ENCODE measurements at regions of chr1 and their contacts with region 1.

Region 1: DNA sequence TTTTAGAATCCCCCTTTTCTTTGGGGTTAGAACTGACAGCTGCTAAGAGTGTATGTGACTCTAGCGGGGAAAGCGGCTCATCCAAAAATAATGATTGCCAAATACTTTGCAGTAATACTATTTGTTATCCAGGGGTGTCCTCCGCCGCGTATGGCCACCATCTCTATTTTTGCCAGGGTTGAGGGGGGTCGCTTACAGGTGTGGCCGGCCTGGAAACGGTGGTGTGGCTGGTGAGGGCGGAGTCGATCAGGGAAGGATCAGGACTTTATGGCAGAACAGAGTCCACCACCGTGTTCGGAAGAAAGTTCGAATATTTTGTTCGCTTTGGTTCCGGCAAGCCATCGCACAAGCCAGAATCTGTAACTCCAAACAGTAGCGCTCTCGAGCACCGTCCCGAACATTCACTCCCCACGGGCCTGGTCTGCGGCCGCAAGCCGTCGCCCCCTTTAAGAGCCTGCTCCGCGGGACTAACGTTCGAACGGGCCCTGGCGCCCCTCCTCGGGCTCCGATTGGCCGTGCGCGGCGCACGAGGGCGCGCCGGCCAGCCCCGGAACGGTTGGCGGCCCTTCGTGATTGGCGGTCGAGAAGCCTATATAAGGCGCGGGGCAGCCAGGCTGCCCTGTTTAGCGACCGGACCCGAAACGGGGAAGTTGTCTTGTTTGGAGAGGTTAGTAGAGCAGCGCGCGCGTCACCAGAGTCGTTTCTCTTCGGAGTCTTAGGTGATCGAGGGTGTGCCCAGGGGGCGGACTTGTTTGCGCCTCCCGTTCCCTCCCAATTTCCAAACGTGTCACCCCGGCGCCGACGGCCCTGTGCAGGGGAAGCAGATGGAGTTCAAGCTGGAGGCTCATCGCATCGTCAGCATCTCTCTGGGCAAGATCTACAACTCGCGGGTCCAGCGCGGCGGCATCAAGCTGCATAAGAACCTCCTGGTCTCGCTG is at the start of gene IER5:
- DNase-seq: peak; percentile 98
- H3K4me3 Mint-ChIP-seq: peak within 1 kb of the TSS; percentile 97
- H3K27ac Mint-ChIP-seq: peak within 1 kb of the TSS; percentile 96
- H3K4me1 Mint-ChIP-seq: peaks cover 39% of the 10 kb centered on the region
- H3K27me3 Mint-ChIP-seq: peaks cover 2% of the 10 kb centered on the region
- total RNA-seq, gene IER5: 27.9 to 28.9 TPM

Region 2: GRCh38 chr1:180571832-180572636 is 516.3 kb before region 1 on chr1:
- CTCF ChIA-PET with region 1: no interaction called
- POLR2A ChIA-PET with region 1: no interaction called
- intact Hi-C with region 1: loop called (anchors 5 kb)
- DNase-seq: peak; percentile 77
- H3K4me3 Mint-ChIP-seq: peak overlapping the region; percentile 17
- H3K27ac Mint-ChIP-seq: peak overlapping the region; percentile 48
- H3K4me1 Mint-ChIP-seq: peaks cover 22% of the 10 kb centered on the region
- H3K27me3 Mint-ChIP-seq: peaks cover 20% of the 10 kb centered on the region

Region 3: GRCh38 chr1:180791806-180792205 is 296.5 kb before region 1 on chr1:
- CTCF ChIA-PET with region 1: no interaction called
- POLR2A ChIA-PET with region 1: no interaction called
- intact Hi-C with region 1: no loop called
- DNase-seq: no peak
- H3K4me3 Mint-ChIP-seq: no peak overlapping the region
- H3K27ac Mint-ChIP-seq: no peak overlapping the region
- H3K4me1 Mint-ChIP-seq: peaks cover 7% of the 10 kb centered on the region
- H3K27me3 Mint-ChIP-seq: no peaks in the 10 kb centered on the region

Region 4: GRCh38 chr1:181021811-181022434 is 66.4 kb before region 1 on chr1:
- CTCF ChIA-PET with region 1: interaction called, 5 read pairs
- POLR2A ChIA-PET with region 1: interaction called, 39 read pairs
- intact Hi-C with region 1: loop called (anchors 1 kb)
- DNase-seq: peak; percentile 84
- H3K4me3 Mint-ChIP-seq: peak overlapping the region; percentile 94
- H3K27ac Mint-ChIP-seq: peak overlapping the region; percentile 97
- H3K4me1 Mint-ChIP-seq: peaks cover 37% of the 10 kb centered on the region
- H3K27me3 Mint-ChIP-seq: no peaks in the 10 kb centered on the region

Region 5: DNA sequence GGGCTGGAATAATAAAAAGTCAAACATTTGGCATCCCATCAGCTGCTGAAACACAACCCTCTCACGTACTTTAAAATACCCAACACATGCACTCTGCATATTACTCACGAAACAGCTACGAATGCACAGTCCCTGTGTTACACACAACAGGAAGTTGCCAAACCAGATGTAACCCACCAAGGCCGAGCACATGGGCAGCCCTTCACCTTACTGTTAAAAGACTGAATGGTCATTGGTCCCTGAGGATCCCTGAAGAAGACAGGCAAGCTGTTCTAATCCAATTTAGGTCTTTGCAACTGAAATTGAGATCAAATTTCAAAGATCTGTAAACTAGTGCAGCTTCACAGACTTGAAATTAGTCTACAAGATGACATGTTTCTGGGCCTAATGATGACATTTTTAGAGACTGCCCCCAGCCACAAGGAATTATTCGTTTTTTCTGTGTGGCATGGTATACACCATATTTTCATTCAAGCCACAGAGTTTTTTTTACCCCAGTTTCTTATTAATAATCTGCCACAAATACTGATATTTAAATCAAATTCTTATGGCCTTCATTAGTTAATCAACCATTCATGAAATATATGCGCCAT is 25.4 kb before region 1 on chr1:
- CTCF ChIA-PET with region 1: interaction called, 3 read pairs
- POLR2A ChIA-PET with region 1: interaction called, 10 read pairs
- intact Hi-C with region 1: no loop called
- DNase-seq: peak; percentile 61
- H3K4me3 Mint-ChIP-seq: peak overlapping the region; percentile 58
- H3K27ac Mint-ChIP-seq: peak overlapping the region; percentile 78
- H3K4me1 Mint-ChIP-seq: peaks cover 20% of the 10 kb centered on the region
- H3K27me3 Mint-ChIP-seq: no peaks in the 10 kb centered on the region

Region 6: GRCh38 chr1:181099152-181100014 is 11.0 kb after region 1 on chr1:
- CTCF ChIA-PET with region 1: interaction called, 24 read pairs
- POLR2A ChIA-PET with region 1: interaction called, 168 read pairs
- intact Hi-C with region 1: loop called (anchors 1 kb)
- DNase-seq: peak; percentile 76
- H3K4me3 Mint-ChIP-seq: peak overlapping the region; percentile 47
- H3K27ac Mint-ChIP-seq: peak overlapping the region; percentile 84
- H3K4me1 Mint-ChIP-seq: peaks cover 71% of the 10 kb centered on the region
- H3K27me3 Mint-ChIP-seq: no peaks in the 10 kb centered on the region

Region 7: GRCh38 chr1:181134543-181135362 is 46.4 kb after region 1 on chr1:
- CTCF ChIA-PET with region 1: interaction called, 229 read pairs
- POLR2A ChIA-PET with region 1: interaction called, 91 read pairs
- intact Hi-C with region 1: no loop called
- DNase-seq: peak; percentile 60
- H3K4me3 Mint-ChIP-seq: peak overlapping the region; percentile 28
- H3K27ac Mint-ChIP-seq: peak overlapping the region; percentile 85
- H3K4me1 Mint-ChIP-seq: peaks cover 39% of the 10 kb centered on the region
- H3K27me3 Mint-ChIP-seq: peaks cover 3% of the 10 kb centered on the region

Region 8: DNA sequence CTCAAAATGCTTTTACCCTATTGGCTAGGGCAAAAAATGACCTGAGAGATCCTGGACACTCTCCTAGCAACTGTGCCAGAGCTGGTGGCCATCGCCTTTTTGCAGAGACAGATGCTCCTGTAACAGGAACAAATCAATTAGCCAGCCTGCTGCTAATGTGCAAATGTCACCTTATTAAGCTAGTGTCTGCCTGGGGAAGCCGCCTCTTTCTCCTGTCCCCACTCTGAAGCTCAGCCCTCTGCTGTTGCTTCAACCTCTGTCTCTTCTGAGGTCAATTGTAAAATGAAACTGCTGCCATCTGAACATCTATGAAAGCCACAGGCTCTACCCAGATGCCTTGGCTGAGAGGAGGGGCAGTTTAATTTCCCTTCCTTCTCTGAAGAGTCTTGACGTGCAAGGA is 309.5 kb after region 1 on chr1:
- CTCF ChIA-PET with region 1: no interaction called
- POLR2A ChIA-PET with region 1: no interaction called
- intact Hi-C with region 1: loop called (anchors 5 kb)
- DNase-seq: peak; percentile 39
- H3K4me3 Mint-ChIP-seq: no peak overlapping the region
- H3K27ac Mint-ChIP-seq: peak overlapping the region; percentile 53
- H3K4me1 Mint-ChIP-seq: peaks cover 38% of the 10 kb centered on the region
- H3K27me3 Mint-ChIP-seq: no peaks in the 10 kb centered on the region

Measured in activated CD4-positive, alpha-beta memory T cell treated with anti-CD3 and anti-CD28 coated beads for 36 hours (primary cell).